PC-9 (cell line): ENCODE measurements at regions of chr10 and their contacts with region 1.

Region 1: DNA sequence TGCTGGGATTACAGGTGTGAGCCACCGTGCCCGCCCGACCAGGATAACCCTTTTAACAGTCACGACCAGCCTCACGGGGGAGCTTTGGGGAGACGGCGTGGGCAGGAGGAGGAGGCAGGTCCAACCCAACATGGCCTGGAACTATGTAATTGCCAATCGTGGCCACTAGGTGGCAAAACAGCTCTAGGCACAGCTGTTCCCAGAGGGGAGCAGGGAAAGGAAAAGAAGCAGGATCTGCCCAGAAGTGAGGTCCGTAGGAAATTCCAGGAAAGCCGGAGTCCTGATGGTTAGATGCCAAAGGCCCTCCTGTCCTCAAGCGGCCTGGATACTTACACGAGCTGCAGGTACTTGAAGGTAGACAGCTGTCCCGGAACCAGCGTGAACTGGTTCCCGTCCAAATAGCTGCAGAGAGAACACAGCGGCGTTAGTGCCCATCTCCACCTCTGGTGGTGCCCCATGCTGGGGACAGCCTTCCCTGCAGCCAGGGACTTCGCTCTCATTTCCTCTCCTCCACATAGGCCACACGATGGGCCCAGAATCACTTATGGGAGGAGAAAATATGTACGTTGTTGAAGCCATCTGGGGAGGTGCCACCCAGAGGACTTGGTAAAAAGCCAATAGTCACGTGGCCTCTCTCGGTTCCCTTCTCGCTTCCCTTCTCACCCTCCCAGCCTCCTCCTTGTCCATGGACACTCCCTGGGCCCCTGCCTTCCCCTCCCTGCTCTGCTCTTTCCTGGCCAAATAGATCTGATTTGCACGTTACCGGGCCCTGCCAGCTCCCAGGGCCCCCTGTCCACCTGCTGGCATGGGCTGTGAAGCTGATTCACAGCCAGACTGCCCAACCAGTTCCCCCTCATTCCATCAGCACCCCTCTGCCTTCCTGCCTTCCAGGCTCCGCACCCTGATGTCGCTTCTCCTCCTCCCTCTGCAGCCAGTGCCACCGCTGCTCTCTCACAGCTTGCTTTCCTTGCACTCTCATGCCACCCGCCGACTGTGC is 148.1 kb downstream of the SLIT1 start:
- DNase-seq: peak; percentile 75 to 79
- H3K4me3 ChIP-seq: peak overlapping the region; percentile 52; the same call in 1 of the 2 replicates
- H3K27ac ChIP-seq: 0 out of 2 replicates have a peak overlapping the region, but pooled peaks have one; percentile 41
- H3K4me1 ChIP-seq: peaks cover 13% of the 10 kb centered on the region
- H3K27me3 ChIP-seq: no peaks in the 10 kb centered on the region
- CTCF ChIP-seq: peak; percentile 85

Region 2: DNA sequence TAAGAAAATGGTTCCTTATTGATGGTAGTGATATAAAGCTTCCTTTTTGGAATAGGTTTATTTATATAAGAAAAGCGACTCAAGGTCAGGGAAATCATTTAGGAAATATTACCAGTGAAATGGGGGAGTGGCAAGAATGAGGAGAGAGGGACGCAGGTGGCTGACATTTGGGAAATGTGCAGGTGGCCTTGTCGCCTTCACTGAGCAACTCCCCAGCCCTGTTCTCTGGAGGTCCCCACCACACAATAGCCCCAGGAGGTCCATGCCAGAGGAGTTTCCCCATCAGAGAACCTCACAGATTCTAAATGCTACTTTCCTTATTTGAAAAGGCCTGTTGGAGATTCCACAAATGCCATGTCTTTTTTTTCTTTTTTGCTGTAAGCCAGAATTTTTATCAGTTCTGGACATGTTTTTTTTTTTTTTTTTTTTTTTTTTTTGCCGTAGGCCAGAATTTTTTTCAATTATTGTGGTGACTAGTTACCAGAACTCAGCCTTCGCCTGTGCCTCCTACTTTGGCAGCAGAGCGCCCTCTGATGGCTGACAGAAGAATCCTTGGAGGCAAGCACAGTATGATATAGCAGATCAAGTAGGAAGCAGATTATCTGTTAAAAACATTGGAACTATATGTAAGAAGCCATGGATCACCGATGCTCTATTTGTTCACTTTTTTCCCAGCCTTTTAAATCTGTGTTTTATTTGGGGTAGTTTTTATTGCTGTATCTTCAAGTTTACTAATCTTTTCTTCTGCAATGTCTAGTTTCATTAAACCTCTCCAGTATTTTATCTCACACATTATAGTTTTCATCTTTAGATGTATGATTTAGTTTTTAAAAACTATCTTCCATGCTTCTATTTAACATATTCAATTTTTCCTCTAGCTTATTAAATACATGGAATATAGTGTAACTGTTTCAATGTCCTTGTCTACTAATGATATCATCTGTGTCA is 697.4 kb before region 1 on chr10:
- CTCF ChIA-PET with region 1: interaction called, 11 read pairs
- POLR2A ChIA-PET with region 1: no interaction called
- intact Hi-C with region 1: no loop called
- DNase-seq: peak; percentile 44 to 46
- H3K4me3 ChIP-seq: no peak overlapping the region
- H3K27ac ChIP-seq: no peak overlapping the region
- H3K4me1 ChIP-seq: no peaks in the 10 kb centered on the region
- H3K27me3 ChIP-seq: no peaks in the 10 kb centered on the region; the same call in 1 of the 2 replicates
- CTCF ChIP-seq: peak; percentile 63

Region 3: GRCh38 chr10:96831867-96832720 is 205.6 kb before region 1 on chr10 and contains the start of gene LCOR:
- CTCF ChIA-PET with region 1: interaction called, 5 read pairs
- POLR2A ChIA-PET with region 1: no interaction called
- intact Hi-C with region 1: loop called (anchors 5 kb)
- DNase-seq: peak; percentile 65 to 79
- H3K4me3 ChIP-seq: peak within 1 kb of the TSS; percentile 75
- H3K27ac ChIP-seq: peak within 1 kb of the TSS; percentile 87
- H3K4me1 ChIP-seq: peaks cover 18% of the 10 kb centered on the region
- H3K27me3 ChIP-seq: no peaks in the 10 kb centered on the region
- CTCF ChIP-seq: no peak
- total RNA-seq, gene LCOR: 28.1 and 36.4 TPM in 2 replicates

Region 4: DNA sequence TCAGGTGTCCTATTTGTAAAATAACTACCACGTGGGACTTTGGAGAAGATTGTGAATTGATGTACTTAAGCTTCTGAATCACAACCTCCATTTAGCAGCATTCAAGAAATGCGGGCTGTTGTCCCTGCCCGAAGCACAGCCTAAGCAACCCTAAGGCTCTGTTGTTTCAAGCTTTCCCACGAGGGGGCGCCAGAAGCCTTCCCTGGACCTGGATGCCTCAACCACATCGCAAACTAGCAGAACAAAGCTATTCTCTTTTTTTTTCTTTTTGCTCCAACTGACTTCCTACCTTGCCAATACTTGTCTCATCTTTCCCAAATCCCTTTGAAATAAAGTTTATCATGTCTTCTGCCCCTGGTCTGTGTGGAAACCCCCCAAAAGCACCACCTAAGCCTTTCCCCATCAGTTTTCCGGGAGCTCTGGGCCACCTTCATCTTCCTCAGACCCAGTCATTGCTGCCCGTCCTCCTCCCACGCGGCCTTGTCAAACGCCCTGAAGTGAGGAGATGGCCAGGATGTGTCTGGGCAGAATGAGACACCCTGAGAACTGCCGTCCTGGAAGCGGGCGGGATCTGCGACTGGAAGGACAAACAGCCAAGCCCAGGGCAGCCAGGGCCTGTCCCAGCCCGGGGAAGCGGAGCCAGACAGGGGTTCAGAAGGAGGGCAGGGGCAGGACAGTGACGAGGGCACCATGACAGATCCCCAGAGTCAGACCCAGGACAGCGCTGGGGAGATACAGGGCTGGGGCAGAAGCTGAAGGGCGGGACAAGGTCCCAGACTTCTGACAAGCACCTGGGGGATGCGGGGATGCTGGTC is 35.4 kb after region 1 on chr10:
- CTCF ChIA-PET with region 1: interaction called, 13 read pairs
- POLR2A ChIA-PET with region 1: interaction called, 4 read pairs
- intact Hi-C with region 1: loop called (anchors 2 kb)
- DNase-seq: peak in 1 of 2 experiments; percentile 78
- H3K4me3 ChIP-seq: no peak overlapping the region
- H3K27ac ChIP-seq: no peak overlapping the region
- H3K4me1 ChIP-seq: no peaks in the 10 kb centered on the region
- H3K27me3 ChIP-seq: 0 out of 2 replicates have a peak, but pooled peaks cover 7% of the 10 kb centered on the region
- CTCF ChIP-seq: peak; percentile 81

Region 5: DNA sequence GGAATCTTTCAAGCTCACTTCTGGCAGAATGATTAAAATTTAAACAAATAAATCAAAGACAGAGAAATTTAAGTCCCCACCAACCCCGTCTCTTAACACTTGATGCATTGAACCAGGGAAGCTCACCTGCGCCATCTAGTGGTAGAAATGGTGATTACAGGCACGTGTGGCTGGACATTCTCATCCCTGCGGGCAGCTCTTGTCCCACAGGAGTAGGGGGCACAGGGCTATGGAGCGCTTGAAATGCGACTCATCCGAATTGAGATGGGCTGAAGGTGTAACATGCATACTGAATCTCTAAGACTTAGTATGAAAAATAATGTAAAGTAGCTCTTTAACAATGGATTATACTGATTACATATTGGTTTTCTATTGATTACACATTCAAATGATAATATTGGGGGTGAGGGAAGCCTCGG is 172.9 kb after region 1 on chr10:
- CTCF ChIA-PET with region 1: interaction called, 3 read pairs
- POLR2A ChIA-PET with region 1: no interaction called
- intact Hi-C with region 1: loop called (anchors 1 kb)
- DNase-seq: peak in 1 of 2 experiments; percentile 55
- H3K4me3 ChIP-seq: no peak overlapping the region
- H3K27ac ChIP-seq: no peak overlapping the region
- H3K4me1 ChIP-seq: no peaks in the 10 kb centered on the region
- H3K27me3 ChIP-seq: no peaks in the 10 kb centered on the region
- CTCF ChIP-seq: peak; percentile 92